ENCODE measurements at regions of chr3 and their contacts with region 1.

Region 1: DNA sequence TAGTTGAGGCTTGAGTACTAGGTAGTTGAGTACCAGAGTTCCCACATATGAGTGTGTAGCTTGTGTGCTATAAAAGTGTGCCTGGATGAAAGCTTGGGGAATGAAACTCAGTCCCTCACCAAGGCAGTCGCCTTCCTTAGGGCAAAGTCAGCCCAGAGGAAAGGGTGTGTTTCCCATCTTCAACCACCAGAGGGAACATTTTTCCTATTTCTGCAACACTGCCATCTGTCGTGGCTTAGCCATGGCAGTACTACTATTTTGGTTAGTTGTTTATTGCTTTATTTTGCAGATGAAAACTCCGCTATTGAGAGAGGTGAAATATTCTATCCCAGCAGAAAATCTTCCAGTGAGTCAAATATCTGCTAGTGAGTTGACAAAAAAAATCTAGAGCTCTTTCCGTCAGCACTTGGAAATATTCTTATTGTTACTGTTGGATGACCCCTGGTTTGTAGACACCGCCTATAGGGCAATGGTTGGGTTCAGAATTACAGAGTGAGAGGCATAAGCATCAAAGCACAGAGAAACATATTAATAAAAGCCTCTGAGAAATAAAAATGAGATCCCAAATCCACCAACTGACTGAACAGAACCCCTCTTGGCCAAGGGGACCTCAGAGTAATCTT is 239.9 kb downstream of the CPNE4 start:
- DNase-seq: peak; percentile 83
- H3K4me3 ChIP-seq: no peak overlapping the region
- H3K27ac ChIP-seq: peak overlapping the region; percentile 77
- H3K4me1 ChIP-seq: peaks cover 48% of the 10 kb centered on the region
- H3K27me3 ChIP-seq: no peaks in the 10 kb centered on the region
- CTCF ChIP-seq: peak; percentile 88

Region 2: GRCh38 chr3:131033480-131034080 is 761.3 kb before region 1 on chr3:
- CTCF ChIA-PET with region 1: interaction called, 3 read pairs
- POLR2A ChIA-PET with region 1: no interaction called
- intact Hi-C with region 1: loop called (anchors 5 kb)
- DNase-seq: peak; percentile 76
- H3K4me3 ChIP-seq: no peak overlapping the region
- H3K27ac ChIP-seq: no peak overlapping the region
- H3K4me1 ChIP-seq: peaks cover 15% of the 10 kb centered on the region
- H3K27me3 ChIP-seq: no peaks in the 10 kb centered on the region
- CTCF ChIP-seq: peak; percentile 83

Region 3: DNA sequence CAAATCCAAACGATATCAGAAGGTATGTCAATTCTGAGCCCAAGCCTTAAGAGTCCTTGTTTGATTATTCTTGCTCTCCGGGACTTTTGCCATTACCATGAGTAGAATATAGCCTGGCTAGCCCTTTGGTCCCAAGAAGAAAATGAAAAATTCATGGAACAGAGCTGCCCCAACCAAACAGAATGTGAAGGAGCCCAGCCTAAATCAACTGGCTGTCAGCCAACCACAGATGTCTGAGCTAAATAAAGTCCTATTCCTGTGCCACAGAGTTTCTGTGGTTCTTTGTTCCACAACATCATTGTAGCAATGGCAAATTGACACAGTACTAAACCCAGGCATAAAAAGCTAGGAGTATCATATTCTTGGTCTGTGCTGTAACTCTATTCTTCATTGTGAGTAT is 54.7 kb after region 1 on chr3:
- CTCF ChIA-PET with region 1: interaction called, 6 read pairs
- POLR2A ChIA-PET with region 1: no interaction called
- intact Hi-C with region 1: loop called (anchors 2 kb)
- DNase-seq: peak; percentile 44
- H3K4me3 ChIP-seq: no peak overlapping the region
- H3K27ac ChIP-seq: peak overlapping the region; percentile 97
- H3K4me1 ChIP-seq: peaks cover 76% of the 10 kb centered on the region
- H3K27me3 ChIP-seq: no peaks in the 10 kb centered on the region
- CTCF ChIP-seq: no peak

Region 4: GRCh38 chr3:131898346-131898745 is 103.5 kb after region 1 on chr3:
- CTCF ChIA-PET with region 1: no interaction called
- POLR2A ChIA-PET with region 1: no interaction called
- intact Hi-C with region 1: loop called (anchors 5 kb)
- DNase-seq: peak; percentile 60
- H3K4me3 ChIP-seq: no peak overlapping the region
- H3K27ac ChIP-seq: peak overlapping the region; percentile 61
- H3K4me1 ChIP-seq: peaks cover 42% of the 10 kb centered on the region
- H3K27me3 ChIP-seq: no peaks in the 10 kb centered on the region
- CTCF ChIP-seq: no peak

Region 5: GRCh38 chr3:132029182-132029902 is 234.5 kb after region 1 on chr3:
- CTCF ChIA-PET with region 1: interaction called, 21 read pairs
- POLR2A ChIA-PET with region 1: interaction called, 3 read pairs
- intact Hi-C with region 1: loop called (anchors 1 kb)
- DNase-seq: peak; percentile 91
- H3K4me3 ChIP-seq: no peak overlapping the region
- H3K27ac ChIP-seq: no peak overlapping the region
- H3K4me1 ChIP-seq: peaks cover 11% of the 10 kb centered on the region
- H3K27me3 ChIP-seq: peaks cover 4% of the 10 kb centered on the region
- CTCF ChIP-seq: peak; percentile 92

Region 6: GRCh38 chr3:132180337-132180791 is 385.5 kb after region 1 on chr3:
- CTCF ChIA-PET with region 1: no interaction called
- POLR2A ChIA-PET with region 1: no interaction called
- intact Hi-C with region 1: loop called (anchors 2 kb)
- DNase-seq: peak; percentile 82
- H3K4me3 ChIP-seq: no peak overlapping the region
- H3K27ac ChIP-seq: no peak overlapping the region
- H3K4me1 ChIP-seq: no peaks in the 10 kb centered on the region
- H3K27me3 ChIP-seq: peaks cover 2% of the 10 kb centered on the region
- CTCF ChIP-seq: peak; percentile 71